Calu3 (cell line): ENCODE measurements at regions of chr4 and their contacts with region 1.

Region 1: DNA sequence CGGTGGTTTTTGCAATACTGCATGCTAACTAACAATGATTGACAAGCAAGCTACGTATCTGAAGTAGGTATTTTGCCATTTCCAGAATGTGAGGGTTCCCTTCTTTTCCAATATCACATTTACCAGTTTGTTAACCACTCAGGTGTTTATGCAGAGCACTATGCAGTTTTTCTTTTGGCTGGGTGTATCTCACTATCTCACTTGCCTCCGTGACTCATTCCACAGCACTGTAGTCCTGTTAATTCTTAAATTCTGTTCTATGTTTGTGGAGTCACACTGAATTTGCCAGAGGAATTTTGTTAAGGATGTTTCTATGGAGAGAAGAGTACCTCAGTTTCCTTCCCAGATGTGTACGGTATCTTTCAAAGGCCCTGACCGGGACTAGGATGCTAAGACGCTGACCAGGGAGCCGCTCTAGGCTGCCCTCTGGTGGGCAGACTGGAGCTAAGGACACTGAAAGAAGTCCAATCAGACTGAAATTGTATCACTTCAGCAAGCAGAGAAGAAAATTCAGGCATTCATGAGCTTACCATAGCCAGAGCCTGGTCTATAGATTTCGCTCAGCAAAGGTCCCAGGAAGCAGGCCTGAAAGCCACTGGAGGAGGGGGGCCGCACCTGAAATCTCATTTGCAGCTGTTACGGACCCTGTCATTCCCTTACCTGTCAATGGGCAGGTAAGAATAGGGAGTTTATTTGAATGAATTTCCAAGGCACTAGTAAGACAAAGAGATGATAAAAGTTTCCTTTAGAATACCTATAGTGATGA is 388.4 kb upstream of the SPOCK3 start:
- DNase-seq: peak; percentile 67
- H3K4me3 Mint-ChIP-seq: no peak overlapping the region
- H3K27ac Mint-ChIP-seq: no peak overlapping the region
- H3K4me1 Mint-ChIP-seq: peaks cover 7% of the 10 kb centered on the region
- H3K27me3 Mint-ChIP-seq: no peaks in the 10 kb centered on the region
- CTCF ChIP-seq: peak; percentile 72

Region 2: DNA sequence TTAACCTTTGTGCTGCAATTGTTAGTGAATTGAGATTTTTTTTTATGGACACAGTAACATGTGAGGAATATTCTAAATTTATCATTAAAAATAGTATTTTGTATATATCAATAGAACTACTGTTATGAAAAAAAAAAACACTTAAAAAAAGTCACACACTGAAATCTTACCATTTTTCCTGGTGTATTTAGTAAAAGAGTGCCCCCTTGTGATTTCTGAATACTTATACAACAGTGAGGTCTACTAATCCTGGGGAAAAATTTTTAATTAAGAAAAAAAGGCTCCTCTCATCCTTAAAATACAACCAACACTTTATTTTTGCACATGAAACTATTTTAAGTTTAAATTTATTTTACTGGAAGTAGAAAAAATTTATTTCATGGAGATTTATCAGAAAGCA is 332.0 kb before region 1 on chr4:
- CTCF ChIA-PET with region 1: no interaction called
- intact Hi-C with region 1: loop called (anchors 10 kb)
- DNase-seq: no peak
- H3K4me3 Mint-ChIP-seq: no peak overlapping the region
- H3K27ac Mint-ChIP-seq: no peak overlapping the region
- H3K4me1 Mint-ChIP-seq: no peaks in the 10 kb centered on the region
- H3K27me3 Mint-ChIP-seq: no peaks in the 10 kb centered on the region
- CTCF ChIP-seq: no peak

Region 3: GRCh38 chr4:167443841-167444240 is 178.8 kb before region 1 on chr4:
- CTCF ChIA-PET with region 1: no interaction called
- intact Hi-C with region 1: loop called (anchors 10 kb)
- DNase-seq: no peak
- H3K4me3 Mint-ChIP-seq: no peak overlapping the region
- H3K27ac Mint-ChIP-seq: no peak overlapping the region
- H3K4me1 Mint-ChIP-seq: no peaks in the 10 kb centered on the region
- H3K27me3 Mint-ChIP-seq: no peaks in the 10 kb centered on the region
- CTCF ChIP-seq: no peak